GM10248 (cell line): ENCODE measurements at regions of chr12 and their contacts with region 1.

Region 1: DNA sequence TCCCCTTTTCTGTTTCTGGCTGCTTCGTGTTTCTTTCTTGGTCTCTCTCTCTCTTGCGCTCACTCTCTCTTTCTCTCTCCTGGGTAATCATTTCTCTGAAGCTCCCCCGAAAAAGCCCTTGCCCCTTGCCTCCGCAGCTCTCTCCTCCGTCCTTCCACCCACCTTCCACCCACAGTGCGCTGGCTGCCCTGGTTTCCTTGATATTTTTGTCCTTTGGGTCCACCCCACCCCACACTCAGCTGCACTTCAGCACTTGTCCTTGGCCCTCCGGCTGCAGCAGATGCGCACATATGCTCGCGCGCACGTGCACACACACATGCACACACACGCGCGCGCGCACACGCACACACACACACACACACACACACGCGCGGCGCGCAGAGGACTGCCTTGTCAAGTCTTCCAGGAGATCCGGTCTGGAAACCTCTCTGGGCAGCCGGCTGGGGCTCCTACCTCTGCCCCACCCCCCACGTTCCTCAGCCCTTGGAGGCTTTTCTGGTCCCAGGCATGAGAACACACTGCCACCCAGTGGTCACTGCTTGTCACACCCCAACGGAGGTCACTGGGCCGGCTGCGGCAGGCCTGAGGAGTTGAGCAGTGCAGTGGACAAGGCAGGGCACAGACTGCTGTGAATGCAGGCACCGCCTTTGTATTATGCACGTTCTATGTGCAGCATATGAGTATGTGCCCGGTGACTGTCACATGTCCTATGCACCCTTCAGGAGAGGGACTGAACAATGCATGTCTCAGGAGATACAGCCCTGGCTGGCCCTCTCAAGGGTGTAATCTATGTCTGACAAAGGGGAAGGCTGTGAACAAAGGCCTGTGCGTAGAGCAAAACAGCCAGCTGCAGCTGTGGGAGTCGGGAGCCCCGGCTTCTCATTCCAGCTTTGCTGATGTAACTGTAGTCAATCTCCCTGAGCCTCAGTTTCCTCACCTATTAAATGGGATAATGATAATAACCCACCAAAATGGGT is 6.5 kb downstream of the LAG3 start:
- DNase-seq: peak; percentile 85
- CTCF ChIP-seq: peak; percentile 99

Region 2: GRCh38 chr12:6764011-6764828 is 14.6 kb before region 1 on chr12:
- CTCF ChIA-PET with region 1: interaction called, 117 read pairs
- POLR2A ChIA-PET with region 1: interaction called, 3 read pairs
- DNase-seq: peak; percentile 96
- CTCF ChIP-seq: no peak

Region 3: GRCh38 chr12:6788972-6789924 is 10.4 kb after region 1 on chr12 and contains the start of gene CD4:
- CTCF ChIA-PET with region 1: interaction called, 33 read pairs
- POLR2A ChIA-PET with region 1: interaction called, 3 read pairs
- DNase-seq: no peak
- CTCF ChIP-seq: no peak